ENCODE measurements at regions of chr2 and their contacts with region 1.

Region 1: DNA sequence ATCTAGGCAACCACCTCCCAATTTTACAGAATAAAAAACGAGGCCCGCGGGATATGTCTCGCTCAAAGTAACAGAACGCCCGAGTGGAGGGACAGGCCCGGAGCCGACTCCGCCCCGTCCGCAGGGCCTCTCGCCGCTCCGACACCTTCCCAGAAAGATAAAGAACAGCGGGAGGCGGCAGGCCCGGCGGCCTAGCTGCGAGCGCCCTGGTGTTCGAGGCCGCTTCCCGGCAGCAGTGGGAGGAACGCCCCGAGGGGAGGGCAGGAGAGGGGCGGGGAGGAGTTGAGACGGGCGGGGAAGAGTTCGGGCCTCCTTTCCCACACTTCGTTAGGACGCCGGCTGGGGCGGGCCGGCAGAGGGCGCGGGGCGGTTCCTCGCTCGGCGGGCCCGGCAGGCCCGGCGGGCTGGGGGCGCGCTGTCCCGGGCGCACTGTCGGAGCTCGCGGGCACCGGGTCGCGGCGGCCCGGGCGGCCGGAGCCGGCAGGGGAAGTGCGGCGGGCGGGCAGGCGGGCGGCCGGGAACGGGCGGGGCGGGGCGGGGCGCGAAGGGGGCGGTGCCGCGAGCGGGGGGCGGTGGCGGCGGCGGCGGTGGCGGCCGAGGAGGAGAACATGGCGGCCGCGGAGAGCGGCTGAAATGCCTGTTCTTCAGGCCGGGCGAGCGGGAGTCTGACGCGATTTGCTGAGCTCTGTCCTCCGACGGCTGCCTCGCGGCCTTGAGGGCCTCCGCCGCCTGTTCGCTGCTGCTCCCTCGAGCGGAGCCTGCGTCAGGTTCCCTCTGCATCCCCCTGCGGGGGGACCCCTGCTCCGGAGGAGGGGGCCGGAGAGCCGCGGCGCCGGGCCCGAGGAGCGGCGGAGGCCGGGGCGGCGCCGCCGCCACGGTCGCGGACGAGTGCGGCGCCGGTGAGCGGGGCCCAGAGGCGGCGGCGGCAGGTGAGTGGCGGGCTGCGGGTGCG is at the start of gene NCOA1:
- DNase-seq: peak; percentile 92
- ATAC-seq: peak; percentile 89 to 95 (median 93)
- H3K4me3 ChIP-seq: peak within 1 kb of the TSS; percentile 63 to 97 (median 88)
- H3K27ac ChIP-seq: peak within 1 kb of the TSS; percentile 90 to 98 (median 94)
- H3K4me1 ChIP-seq: peaks cover 4 to 46% (median 36%) of the 10 kb centered on the region in 9 donors
- H3K27me3 ChIP-seq: no peaks in the 10 kb centered on the region
- CTCF ChIP-seq: peak in 6 of 9 donors; percentile 12 to 40 (median 23)
- total RNA-seq, gene NCOA1: 28.5 to 36.7 (median 32.5) TPM

Region 2: GRCh38 chr2:24191848-24192247 is 299.1 kb before region 1 on chr2:
- intact Hi-C with region 1: no loop called
- DNase-seq: no peak
- ATAC-seq: no peak
- H3K4me3 ChIP-seq: no peak overlapping the region
- H3K27ac ChIP-seq: no peak overlapping the region
- H3K4me1 ChIP-seq: no peaks in the 10 kb centered on the region
- H3K27me3 ChIP-seq: no peaks in the 10 kb centered on the region
- CTCF ChIP-seq: no peak

Region 3: DNA sequence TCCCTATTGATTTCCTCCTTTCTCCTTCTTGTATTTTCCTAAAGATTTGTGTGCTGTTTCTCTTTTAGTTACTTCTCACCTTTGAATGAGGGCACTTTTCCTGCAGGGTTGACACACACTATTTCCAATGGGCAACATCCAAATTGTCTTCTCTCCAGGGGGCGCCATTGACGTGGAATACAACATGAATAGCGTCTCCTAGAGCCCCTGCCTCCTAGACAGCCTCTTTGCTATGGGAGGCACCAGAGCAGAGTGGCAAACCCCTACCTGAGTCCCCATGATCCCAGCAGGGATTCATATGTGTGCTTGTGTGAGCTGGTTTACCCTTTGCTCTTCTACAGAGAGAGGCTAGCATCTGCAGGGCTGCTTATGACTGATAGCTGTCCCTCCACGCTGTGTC is 69.3 kb before region 1 on chr2:
- intact Hi-C with region 1: loop called in 1 of 10 experiments (anchors 10 kb)
- DNase-seq: peak in 1 of 2 donors; percentile 75
- ATAC-seq: peak in 7 of 8 donors; percentile 58 to 90 (median 83)
- H3K4me3 ChIP-seq: no peak overlapping the region
- H3K27ac ChIP-seq: no peak overlapping the region
- H3K4me1 ChIP-seq: peaks cover 0 to 5% (median 0%) of the 10 kb centered on the region in 9 donors
- H3K27me3 ChIP-seq: no peaks in the 10 kb centered on the region
- CTCF ChIP-seq: peak; percentile 28 to 78 (median 66)

Region 4: DNA sequence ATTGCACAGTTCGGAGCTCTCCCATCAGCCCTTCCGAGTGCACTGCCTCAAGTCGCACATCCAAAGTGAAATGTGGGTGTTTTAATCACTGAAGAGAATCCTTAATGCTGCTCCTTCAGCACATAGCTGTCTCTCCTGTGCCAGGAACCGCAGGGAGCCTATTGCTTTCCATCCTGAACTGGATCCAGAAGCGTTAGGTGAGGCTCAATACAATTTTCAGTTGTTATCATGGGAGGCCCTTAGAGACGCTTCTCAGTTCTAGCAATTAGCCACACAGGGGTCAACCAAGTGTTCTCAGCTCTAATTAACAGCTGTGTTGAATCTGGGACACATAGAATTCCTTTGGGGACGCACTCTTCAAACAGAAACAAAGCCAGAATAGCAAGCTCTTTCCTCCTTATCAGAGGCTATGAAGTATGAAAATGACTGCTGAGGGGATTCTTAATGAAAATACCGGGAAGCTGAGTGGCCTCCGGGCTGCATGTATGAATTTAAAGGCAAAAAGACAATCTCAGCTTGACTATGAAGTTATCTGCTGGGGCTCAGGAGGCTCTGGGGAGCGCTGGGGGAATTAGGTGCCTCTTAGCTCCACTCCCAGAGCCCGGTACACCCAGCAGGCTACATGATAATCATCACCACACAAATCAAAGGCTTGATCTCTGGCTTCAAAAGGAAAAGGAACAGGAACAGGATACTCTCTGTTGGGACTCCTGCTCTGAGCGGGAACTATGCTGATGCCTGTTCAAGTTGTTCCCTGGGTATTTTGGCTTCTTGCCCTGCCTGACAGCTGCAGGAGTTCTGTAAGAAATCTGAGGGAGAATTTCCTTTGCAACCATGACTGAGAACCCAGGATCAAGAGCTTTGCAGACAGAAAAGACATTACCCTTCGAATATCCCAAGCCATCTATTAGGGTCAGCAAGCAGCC is 55.3 kb before region 1 on chr2:
- intact Hi-C with region 1: loop called in 4 of 10 experiments (anchors 1 to 10 kb)
- DNase-seq: peak; percentile 48 to 91
- ATAC-seq: peak; percentile 75 to 91 (median 88)
- H3K4me3 ChIP-seq: peak overlapping the region in 6 of 10 donors; percentile 5 to 27 (median 20)
- H3K27ac ChIP-seq: peak overlapping the region; percentile 58 to 83 (median 71)
- H3K4me1 ChIP-seq: peaks cover 7 to 56% (median 40%) of the 10 kb centered on the region in 9 donors
- H3K27me3 ChIP-seq: no peaks in the 10 kb centered on the region
- CTCF ChIP-seq: no peak

Region 5: GRCh38 chr2:24652265-24653182 is 161.6 kb after region 1 on chr2:
- intact Hi-C with region 1: loop called in 2 of 10 experiments (anchors 10 kb)
- DNase-seq: no peak
- ATAC-seq: peak in 1 of 8 donors; percentile 49
- H3K4me3 ChIP-seq: no peak overlapping the region
- H3K27ac ChIP-seq: peak overlapping the region in 1 of 10 donors; percentile 24
- H3K4me1 ChIP-seq: peaks cover 0 to 20% (median 16%) of the 10 kb centered on the region in 9 donors
- H3K27me3 ChIP-seq: no peaks in the 10 kb centered on the region
- CTCF ChIP-seq: no peak

Region 6: DNA sequence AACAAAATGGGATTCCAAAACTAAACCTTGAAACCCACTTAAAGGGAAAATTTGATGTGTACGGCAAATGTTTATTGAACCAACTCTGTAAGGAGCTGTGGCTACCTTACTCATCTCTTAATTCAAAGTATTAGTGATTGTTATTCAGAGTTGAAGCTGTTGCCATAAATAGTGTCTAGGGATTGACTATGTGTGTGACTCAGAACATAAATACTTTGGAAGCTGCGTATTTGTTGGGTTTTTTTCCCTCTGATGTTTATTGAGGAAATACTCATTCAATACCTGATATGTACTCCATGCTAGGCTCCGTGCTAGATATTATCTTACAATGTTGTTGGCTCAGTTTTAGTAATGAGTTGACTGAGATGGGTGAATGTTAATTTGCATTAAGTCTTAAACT is 211.8 kb after region 1 on chr2:
- intact Hi-C with region 1: loop called in 1 of 10 experiments (anchors 10 kb)
- DNase-seq: no peak
- ATAC-seq: peak in 1 of 8 donors; percentile 44
- H3K4me3 ChIP-seq: no peak overlapping the region
- H3K27ac ChIP-seq: no peak overlapping the region
- H3K4me1 ChIP-seq: peaks cover 0 to 19% (median 8%) of the 10 kb centered on the region in 9 donors
- H3K27me3 ChIP-seq: no peaks in the 10 kb centered on the region
- CTCF ChIP-seq: no peak

Region 7: GRCh38 chr2:24792874-24793760 is 302.2 kb after region 1 on chr2 and contains the starts of genes CENPO and PTRHD1:
- intact Hi-C with region 1: loop called in 1 of 10 experiments (anchors 5 kb)
- DNase-seq: peak; percentile 95 to 96
- ATAC-seq: peak; percentile 99 to 100 (median 99)
- H3K4me3 ChIP-seq: peak within 1 kb of the TSS; percentile 55 to 93 (median 75)
- H3K27ac ChIP-seq: peak within 1 kb of the TSS; percentile 94 to 100 (median 98)
- H3K4me1 ChIP-seq: peaks cover 0 to 23% (median 14%) of the 10 kb centered on the region in 9 donors
- H3K27me3 ChIP-seq: no peaks in the 10 kb centered on the region
- CTCF ChIP-seq: peak; percentile 48 to 77 (median 65)
- total RNA-seq, gene CENPO: 1.5 to 4.6 (median 2.3) TPM
- total RNA-seq, gene PTRHD1: 23.8 to 38.8 (median 32.3) TPM

Region 8: DNA sequence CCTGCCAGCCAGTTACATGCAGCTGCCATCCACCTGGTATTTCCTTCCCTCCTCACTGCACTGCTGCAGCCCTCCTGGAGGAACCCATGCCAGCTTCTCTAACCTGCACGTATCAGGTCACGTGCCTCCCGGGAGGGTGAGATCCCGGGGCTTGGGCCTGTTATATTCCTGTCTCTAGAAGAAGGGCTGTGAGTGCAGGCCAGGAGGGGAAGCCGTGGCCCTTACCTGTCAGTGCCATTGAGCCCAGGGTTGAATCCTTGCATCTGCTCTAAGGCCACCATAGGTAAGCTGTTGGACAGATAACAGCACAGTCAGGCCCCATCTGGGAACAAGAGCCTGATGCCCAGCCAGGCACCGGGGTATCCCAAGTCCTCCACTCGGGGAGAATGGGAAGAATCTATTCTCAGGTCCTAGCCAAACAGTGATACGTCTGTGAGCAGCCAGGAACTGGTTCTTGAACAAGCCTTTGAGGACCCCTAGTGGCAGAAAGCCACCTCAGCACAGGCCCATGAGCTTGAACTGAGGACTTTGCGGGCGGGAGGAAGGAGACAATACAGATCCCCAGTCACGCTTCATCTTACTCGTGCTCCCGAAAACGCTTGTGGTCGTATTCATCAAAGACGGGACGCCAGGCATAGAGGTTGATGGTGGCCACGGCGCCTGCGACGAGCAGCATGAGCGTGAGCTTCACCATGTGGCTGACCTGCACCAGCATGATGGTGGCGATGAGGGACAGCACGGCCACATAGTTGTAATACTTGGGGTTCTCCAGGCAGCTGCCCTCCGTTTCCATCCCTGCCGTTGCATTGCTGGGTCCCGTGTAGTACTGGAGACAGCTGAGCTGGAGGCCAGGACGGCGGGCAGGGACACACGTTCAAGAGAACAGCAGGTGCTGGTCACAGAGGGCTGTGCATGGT is 336.6 kb after region 1 on chr2:
- intact Hi-C with region 1: loop called in 1 of 10 experiments (anchors 5 kb)
- DNase-seq: peak; percentile 68 to 86
- ATAC-seq: peak; percentile 89 to 97 (median 92)
- H3K4me3 ChIP-seq: no peak overlapping the region
- H3K27ac ChIP-seq: peak overlapping the region in 2 of 10 donors; percentile 8 to 26
- H3K4me1 ChIP-seq: peaks cover 4 to 22% (median 14%) of the 10 kb centered on the region in 9 donors
- H3K27me3 ChIP-seq: no peaks in the 10 kb centered on the region
- CTCF ChIP-seq: peak; percentile 81 to 96 (median 90)